Breast epithelium (tissue), 4 donors: ENCODE measurements at regions of chr12 and their contacts with region 1.

Region 1: GRCh38 chr12:13208533-13209435 is 12.3 kb downstream of the EMP1 start:
- DNase-seq: no peak
- H3K4me3 ChIP-seq: no peak overlapping the region
- H3K27ac ChIP-seq: peak overlapping the region; percentile 38 to 69
- H3K4me1 ChIP-seq: peaks cover 3 to 33% of the 10 kb centered on the region in 2 donors
- H3K27me3 ChIP-seq: no peaks in the 10 kb centered on the region
- CTCF ChIP-seq: peak in 1 of 3 donors; percentile 31
- POLR2A ChIP-seq: no peak

Region 2: GRCh38 chr12:12684375-12685106 is 524.2 kb before region 1 on chr12:
- intact Hi-C with region 1: no loop called
- DNase-seq: no peak
- H3K4me3 ChIP-seq: no peak overlapping the region
- H3K27ac ChIP-seq: no peak overlapping the region
- H3K4me1 ChIP-seq: no peaks in the 10 kb centered on the region
- H3K27me3 ChIP-seq: no peaks in the 10 kb centered on the region
- CTCF ChIP-seq: no peak
- POLR2A ChIP-seq: no peak

Region 3: GRCh38 chr12:13094347-13094746 is 114.4 kb before region 1 on chr12:
- intact Hi-C with region 1: loop called (anchors 10 kb)
- DNase-seq: no peak
- H3K4me3 ChIP-seq: no peak overlapping the region
- H3K27ac ChIP-seq: no peak overlapping the region
- H3K4me1 ChIP-seq: peaks cover 0 to 4% of the 10 kb centered on the region in 2 donors
- H3K27me3 ChIP-seq: no peaks in the 10 kb centered on the region
- CTCF ChIP-seq: no peak
- POLR2A ChIP-seq: no peak

Region 4: DNA sequence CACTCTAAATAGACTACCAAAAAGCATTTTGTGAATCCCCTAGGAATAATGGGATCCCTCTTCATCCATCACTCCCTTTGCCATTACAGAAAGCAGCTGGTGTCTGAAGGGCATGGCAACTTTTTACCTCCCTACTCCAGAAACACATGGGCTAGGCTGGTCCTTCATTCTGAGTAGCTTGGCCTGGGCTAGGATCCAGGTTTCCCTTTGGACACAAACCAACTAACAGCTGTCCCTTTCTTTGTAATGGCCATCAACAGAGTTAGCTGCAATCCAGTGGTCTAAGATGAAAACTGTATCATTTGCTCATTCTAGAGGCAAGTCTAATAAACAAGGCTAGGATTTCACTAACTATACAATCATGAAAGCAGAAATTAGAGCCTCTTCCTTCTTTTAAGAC is 765.2 kb after region 1 on chr12:
- intact Hi-C with region 1: no loop called
- DNase-seq: no peak
- H3K4me3 ChIP-seq: no peak overlapping the region
- H3K27ac ChIP-seq: no peak overlapping the region
- H3K4me1 ChIP-seq: no peaks in the 10 kb centered on the region
- H3K27me3 ChIP-seq: peaks cover 0 to 15% of the 10 kb centered on the region in 2 donors
- CTCF ChIP-seq: no peak
- POLR2A ChIP-seq: no peak